Activated CD4-positive, alpha-beta memory T cell treated with anti-CD3 and anti-CD28 coated beads for 36 hours (primary cell): ENCODE measurements at regions of chr3 and their contacts with region 1.

Region 1: GRCh38 chr3:112773864-112774590 is 72.6 kb downstream of the CD200R1L start:
- DNase-seq: peak; percentile 64
- H3K4me3 Mint-ChIP-seq: no peak overlapping the region
- H3K27ac Mint-ChIP-seq: peak overlapping the region; percentile 61
- H3K4me1 Mint-ChIP-seq: peaks cover 63% of the 10 kb centered on the region
- H3K27me3 Mint-ChIP-seq: no peaks in the 10 kb centered on the region

Region 2: GRCh38 chr3:112582244-112582874 is 191.7 kb before region 1 on chr3:
- CTCF ChIA-PET with region 1: no interaction called
- POLR2A ChIA-PET with region 1: no interaction called
- intact Hi-C with region 1: no loop called
- DNase-seq: peak; percentile 56
- H3K4me3 Mint-ChIP-seq: no peak overlapping the region
- H3K27ac Mint-ChIP-seq: no peak overlapping the region
- H3K4me1 Mint-ChIP-seq: peaks cover 5% of the 10 kb centered on the region
- H3K27me3 Mint-ChIP-seq: no peaks in the 10 kb centered on the region

Region 3: DNA sequence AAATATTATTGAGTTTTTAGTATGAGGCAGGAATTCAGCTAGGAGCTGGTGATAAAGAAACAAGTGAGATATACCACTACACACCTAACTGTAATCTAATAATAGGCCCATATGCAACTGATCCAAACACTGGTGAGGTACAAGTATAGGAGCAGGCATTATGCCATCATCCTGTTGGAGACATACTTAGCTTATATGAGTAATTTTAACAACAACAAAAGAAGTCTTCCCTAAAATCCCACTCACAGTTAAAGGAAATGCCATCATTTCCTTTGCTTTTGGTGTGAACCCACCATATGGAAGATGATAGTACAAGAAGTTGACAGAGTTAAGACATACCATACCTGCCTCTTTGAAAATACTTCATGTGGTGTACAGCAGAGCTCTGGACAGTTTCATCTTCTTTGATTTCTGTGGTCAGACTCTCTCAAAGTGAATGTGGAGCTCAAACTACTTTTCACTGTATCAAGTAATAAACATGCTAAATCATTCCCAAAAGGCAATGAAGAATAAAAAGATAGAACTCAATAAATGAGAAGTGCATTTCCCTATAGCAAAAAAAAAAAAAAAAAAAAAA is 12.9 kb before region 1 on chr3:
- CTCF ChIA-PET with region 1: no interaction called
- POLR2A ChIA-PET with region 1: no interaction called
- intact Hi-C with region 1: no loop called
- DNase-seq: no peak
- H3K4me3 Mint-ChIP-seq: no peak overlapping the region
- H3K27ac Mint-ChIP-seq: no peak overlapping the region
- H3K4me1 Mint-ChIP-seq: peaks cover 2% of the 10 kb centered on the region
- H3K27me3 Mint-ChIP-seq: no peaks in the 10 kb centered on the region

Region 4: GRCh38 chr3:112793311-112794081 is 19.5 kb after region 1 on chr3:
- CTCF ChIA-PET with region 1: no interaction called
- POLR2A ChIA-PET with region 1: no interaction called
- intact Hi-C with region 1: no loop called
- DNase-seq: no peak
- H3K4me3 Mint-ChIP-seq: no peak overlapping the region
- H3K27ac Mint-ChIP-seq: no peak overlapping the region
- H3K4me1 Mint-ChIP-seq: peaks cover 27% of the 10 kb centered on the region
- H3K27me3 Mint-ChIP-seq: no peaks in the 10 kb centered on the region

Region 5: GRCh38 chr3:112814266-112814665 is 40.2 kb after region 1 on chr3:
- CTCF ChIA-PET with region 1: interaction called, 4 read pairs
- POLR2A ChIA-PET with region 1: no interaction called
- intact Hi-C with region 1: loop called (anchors 5 kb)
- DNase-seq: no peak
- H3K4me3 Mint-ChIP-seq: no peak overlapping the region
- H3K27ac Mint-ChIP-seq: no peak overlapping the region
- H3K4me1 Mint-ChIP-seq: peaks cover 20% of the 10 kb centered on the region
- H3K27me3 Mint-ChIP-seq: no peaks in the 10 kb centered on the region